ENCODE measurements at regions of chr4 and their contacts with region 1.

Region 1: GRCh38 chr4:47686294-47686872 is 151.5 kb downstream of the CORIN start:
- DNase-seq: peak; percentile 50
- CTCF ChIP-seq: peak; percentile 60

Region 2: DNA sequence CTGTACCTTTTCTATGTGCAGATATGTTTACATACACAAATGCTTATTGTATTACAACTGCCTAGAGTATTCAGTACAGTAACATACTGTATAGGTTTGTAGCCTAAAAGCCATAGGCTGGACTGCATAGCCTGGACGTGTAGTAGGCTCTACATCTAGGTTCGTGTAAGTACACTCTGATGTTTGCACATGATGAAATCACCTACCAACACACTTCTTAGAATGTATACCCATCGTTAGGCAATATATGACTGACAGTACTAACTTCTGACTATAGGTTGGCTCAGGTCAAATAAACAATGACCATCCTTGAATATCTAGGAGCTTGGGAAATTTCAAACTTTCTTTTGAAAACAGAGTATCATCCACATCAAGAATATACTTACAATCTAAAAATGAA is 12.5 kb after region 1 on chr4:
- CTCF ChIA-PET with region 1: interaction called, 16 read pairs
- POLR2A ChIA-PET with region 1: no interaction called
- DNase-seq: no peak
- CTCF ChIP-seq: no peak